CD4-positive, alpha-beta T cell (primary cell): ENCODE measurements at regions of chr19 and their contacts with region 1.

Region 1: GRCh38 chr19:38718747-38719543 is 25.3 kb downstream of the CAPN12 start:
- DNase-seq: no peak
- ATAC-seq: no peak
- H3K4me3 ChIP-seq: no peak overlapping the region
- H3K4me3 Mint-ChIP-seq: no peak overlapping the region
- H3K27ac ChIP-seq: no peak overlapping the region
- H3K27ac Mint-ChIP-seq: no peak overlapping the region
- H3K4me1 ChIP-seq: no peaks in the 10 kb centered on the region
- H3K4me1 Mint-ChIP-seq: no peaks in the 10 kb centered on the region
- H3K27me3 ChIP-seq: no peaks in the 10 kb centered on the region
- H3K27me3 Mint-ChIP-seq: no peaks in the 10 kb centered on the region
- CTCF ChIP-seq: no peak

Region 2: DNA sequence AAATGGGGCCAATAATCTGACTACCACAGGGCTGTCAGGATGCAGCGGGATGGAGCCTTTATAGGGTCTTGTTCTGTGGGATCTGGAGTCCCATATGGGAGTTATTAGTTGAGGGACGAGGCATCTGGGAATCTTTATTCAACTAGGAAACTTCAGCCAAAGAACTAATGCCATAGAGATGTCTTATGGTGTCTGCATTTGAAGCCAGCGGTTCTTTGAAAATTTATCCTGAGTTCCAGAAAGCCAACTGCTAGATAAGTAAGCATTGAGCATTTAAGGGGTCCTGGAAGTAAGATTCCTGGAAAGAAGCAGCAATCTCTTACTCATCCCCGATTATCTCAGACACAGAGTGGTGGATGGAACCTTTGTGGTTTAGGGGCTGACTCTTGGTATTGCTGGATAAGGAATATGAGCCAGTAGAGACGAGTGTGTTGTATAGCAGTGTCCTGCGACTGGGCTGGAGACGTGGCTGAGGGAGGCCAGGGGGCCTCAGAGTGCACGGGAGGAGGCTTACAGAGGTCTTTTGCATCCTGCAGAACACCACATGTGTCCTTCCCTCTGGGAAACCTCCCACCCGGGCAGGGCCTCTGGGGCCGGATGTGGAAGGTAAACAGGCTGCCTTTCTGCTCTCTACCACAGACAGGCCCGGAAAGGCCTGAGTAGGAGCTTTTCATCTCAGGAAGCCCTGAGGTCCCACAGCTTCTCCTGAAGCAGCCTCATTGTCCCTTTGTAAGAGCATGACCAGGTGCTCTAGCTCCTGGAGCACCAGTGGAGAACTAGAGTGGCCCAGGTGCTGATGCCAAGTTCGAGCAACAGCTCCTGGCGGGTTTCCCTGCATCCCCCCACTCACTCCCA is 42.7 kb before region 1 on chr19:
- CTCF ChIA-PET with region 1: no interaction called
- POLR2A ChIA-PET with region 1: no interaction called
- intact Hi-C with region 1: loop called in 1 of 2 experiments (anchors 5 kb)
- DNase-seq: peak in 1 of 14 experiments; percentile 36
- ATAC-seq: no peak
- H3K4me3 ChIP-seq: no peak overlapping the region
- H3K4me3 Mint-ChIP-seq: no peak overlapping the region
- H3K27ac ChIP-seq: peak overlapping the region in 1 of 2 donors; percentile 33
- H3K27ac Mint-ChIP-seq: peak overlapping the region; percentile 10
- H3K4me1 ChIP-seq: peaks cover 73% of the 10 kb centered on the region
- H3K4me1 Mint-ChIP-seq: peaks cover 74% of the 10 kb centered on the region
- H3K27me3 ChIP-seq: no peaks in the 10 kb centered on the region
- H3K27me3 Mint-ChIP-seq: no peaks in the 10 kb centered on the region
- CTCF ChIP-seq: no peak